AG04450 (cell line): ENCODE measurements at regions of chr6 and their contacts with region 1.

Region 1: DNA sequence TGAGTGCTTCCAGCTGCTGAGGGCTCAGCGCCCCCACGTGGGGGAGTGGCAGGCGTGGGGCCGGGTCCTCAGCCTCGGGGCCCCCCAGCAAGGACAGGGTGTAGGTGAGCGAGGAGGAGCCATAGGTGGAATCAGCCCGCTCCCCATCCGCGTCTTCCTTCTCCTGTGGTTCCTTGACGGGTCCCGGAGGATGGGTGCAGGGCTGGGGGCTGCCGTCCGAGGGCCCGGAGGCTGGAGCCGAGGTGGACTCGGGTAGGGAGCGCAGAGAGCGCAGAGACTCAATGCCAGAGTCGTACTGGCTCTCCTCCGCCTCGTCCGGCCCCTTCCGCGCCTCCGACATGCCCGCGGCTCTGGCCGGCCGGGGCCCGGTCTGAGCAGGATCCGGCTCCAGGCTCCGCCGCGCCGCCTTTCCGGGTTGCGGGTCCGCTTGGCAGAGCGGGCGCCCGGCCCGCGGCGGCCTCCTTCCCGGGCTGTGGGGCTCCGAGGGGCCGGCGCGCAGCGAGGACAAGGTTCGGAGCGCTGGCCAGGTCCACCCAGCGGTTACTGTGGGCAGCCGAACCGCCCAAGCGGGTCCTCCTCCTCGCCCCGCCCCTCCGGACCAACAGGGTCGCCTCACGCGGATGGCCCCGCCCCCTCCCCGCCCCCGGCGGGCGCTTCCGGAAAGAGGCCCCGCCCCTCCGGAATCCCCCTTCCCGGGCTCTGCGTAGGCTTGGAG is at the start of gene NFKBIE:
- DNase-seq: peak; percentile 71
- H3K4me3 ChIP-seq: peak within 1 kb of the TSS; percentile 86
- H3K27ac ChIP-seq: peak within 1 kb of the TSS; percentile 75
- H3K27me3 ChIP-seq: peaks cover 22% of the 10 kb centered on the region
- CTCF ChIP-seq: peak; percentile 37
- polyA plus RNA-seq, gene NFKBIE: 13.7 and 17.0 TPM in 2 replicates

Region 2: GRCh38 chr6:44304282-44305199 is 39.4 kb after region 1 on chr6:
- CTCF ChIA-PET with region 1: interaction called, 11 read pairs
- POLR2A ChIA-PET with region 1: no interaction called
- DNase-seq: no peak
- H3K4me3 ChIP-seq: no peak overlapping the region
- H3K27ac ChIP-seq: no peak overlapping the region
- H3K27me3 ChIP-seq: no peaks in the 10 kb centered on the region
- CTCF ChIP-seq: peak; percentile 76

Region 3: GRCh38 chr6:44312901-44313788 is 48.0 kb after region 1 on chr6 and contains the start of gene AARS2:
- CTCF ChIA-PET with region 1: interaction called, 18 read pairs
- POLR2A ChIA-PET with region 1: interaction called, 3 read pairs
- DNase-seq: peak; percentile 38
- H3K4me3 ChIP-seq: peak within 1 kb of the TSS; percentile 82
- H3K27ac ChIP-seq: no peak within 1 kb of the TSS
- H3K27me3 ChIP-seq: peaks cover 5% of the 10 kb centered on the region
- CTCF ChIP-seq: peak; percentile 99
- polyA plus RNA-seq, gene AARS2: 5.8 and 6.2 TPM in 2 replicates

Region 4: GRCh38 chr6:44338228-44339122 is 73.3 kb after region 1 on chr6:
- CTCF ChIA-PET with region 1: interaction called, 93 read pairs
- POLR2A ChIA-PET with region 1: no interaction called
- DNase-seq: peak; percentile 20
- H3K4me3 ChIP-seq: no peak overlapping the region
- H3K27ac ChIP-seq: no peak overlapping the region
- H3K27me3 ChIP-seq: peaks cover 54% of the 10 kb centered on the region
- CTCF ChIP-seq: peak; percentile 81